ENCODE measurements at regions of chr1 and their contacts with region 1.

Region 1: GRCh38 chr1:112390775-112391602 is 5.0 kb upstream of the CTTNBP2NL start:
- DNase-seq: peak; percentile 89
- ATAC-seq: peak; percentile 85
- H3K4me3 ChIP-seq: peak overlapping the region; percentile 43 to 51
- H3K27ac ChIP-seq: peak overlapping the region; percentile 16
- H3K4me1 ChIP-seq: peaks cover 19 to 48% of the 10 kb centered on the region in 2 experiments
- H3K27me3 ChIP-seq: no peaks in the 10 kb centered on the region
- CTCF ChIP-seq: peak; percentile 92 to 94 (median 94)
- POLR2A ChIP-seq: no peak
- RAD21 ChIP-seq: peak; percentile 99

Region 2: DNA sequence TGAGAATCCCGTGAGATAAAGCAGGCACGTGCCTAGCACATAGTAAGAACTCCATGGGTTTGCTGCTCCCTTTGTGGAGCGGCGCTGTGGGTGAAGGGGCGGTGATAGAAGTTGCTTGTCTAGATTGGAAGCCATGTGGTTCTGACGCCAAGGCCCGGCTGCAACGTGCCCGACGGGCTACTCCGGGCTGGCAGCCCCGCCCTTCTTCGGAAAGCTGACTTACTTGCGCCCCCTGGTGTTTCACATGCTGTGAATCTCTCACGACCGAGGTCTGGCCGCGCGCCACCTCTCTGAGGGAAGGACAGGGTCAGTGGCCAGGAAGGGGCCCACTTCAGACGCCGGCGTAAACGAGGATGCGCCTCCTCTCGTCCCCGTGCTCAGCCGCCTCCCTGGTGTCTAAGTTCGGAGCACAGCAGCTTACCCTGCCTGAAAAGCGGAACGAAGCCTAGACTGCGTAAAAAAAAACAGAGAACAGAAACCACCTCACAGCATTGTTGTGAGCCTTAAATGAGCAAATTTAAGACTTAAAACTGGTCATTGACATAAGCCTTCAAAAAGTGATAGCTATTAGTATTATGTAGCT is 75.2 kb after region 1 on chr1:
- CTCF ChIA-PET with region 1: interaction called, 6 read pairs
- POLR2A ChIA-PET with region 1: interaction called, 3 read pairs
- RAD21 ChIA-PET with region 1: interaction called in 1 of 2 experiments, 4 read pairs
- intact Hi-C with region 1: loop called (anchors 1 kb)
- DNase-seq: peak; percentile 82
- ATAC-seq: peak; percentile 93
- H3K4me3 ChIP-seq: peak overlapping the region; percentile 19 to 26
- H3K27ac ChIP-seq: no peak overlapping the region
- H3K4me1 ChIP-seq: peaks cover 0 to 22% of the 10 kb centered on the region in 2 experiments; a peak in 2 of 4 replicates
- H3K27me3 ChIP-seq: no peaks in the 10 kb centered on the region
- CTCF ChIP-seq: peak; percentile 74 to 89 (median 80)
- POLR2A ChIP-seq: no peak
- RAD21 ChIP-seq: peak; percentile 90

Region 3: DNA sequence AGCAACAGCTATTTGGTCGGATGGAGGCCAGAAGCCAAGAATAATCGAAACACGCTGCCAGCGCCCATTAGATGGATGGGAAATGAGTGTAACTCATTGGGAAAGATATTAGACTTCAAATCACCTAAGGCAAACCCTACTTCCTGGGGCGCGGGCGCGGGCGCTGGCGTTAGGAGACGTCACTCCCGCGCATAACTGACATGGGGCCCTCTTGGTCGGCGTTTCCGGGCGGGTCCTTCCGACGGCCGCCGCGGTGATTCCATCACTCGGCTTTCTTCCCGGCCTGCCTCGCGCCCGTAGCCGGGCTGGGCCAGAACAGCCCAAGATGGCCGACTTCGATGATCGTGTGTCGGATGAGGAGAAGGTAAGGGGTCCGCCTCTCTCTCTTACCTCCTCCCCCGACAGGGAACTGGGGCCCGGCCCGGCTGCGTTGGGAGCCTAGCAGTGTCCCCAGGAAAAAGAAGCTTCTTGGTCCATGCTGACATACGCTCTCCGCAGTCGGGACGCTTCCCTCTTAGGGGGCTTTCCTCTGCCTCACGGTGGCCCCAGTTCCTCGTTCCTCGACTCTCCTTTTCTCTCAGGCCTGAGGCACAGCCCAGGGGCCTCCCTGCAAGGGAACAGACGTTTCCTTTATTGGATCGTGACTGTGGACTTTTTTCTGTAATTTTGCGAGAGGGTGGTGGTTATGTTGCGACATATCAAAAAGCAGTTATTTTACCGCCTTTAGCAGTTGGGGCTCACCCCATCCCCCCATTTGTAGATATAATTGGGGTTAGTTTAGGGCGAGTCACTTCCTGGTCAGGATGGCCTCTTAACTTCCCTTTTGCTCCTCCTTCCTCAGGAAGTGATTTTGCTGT is 228.8 kb after region 1 on chr1 and contains the start of gene CAPZA1:
- CTCF ChIA-PET with region 1: interaction called, 15 read pairs
- POLR2A ChIA-PET with region 1: interaction called, 5 read pairs
- RAD21 ChIA-PET with region 1: interaction called in 1 of 2 experiments, 3 read pairs
- intact Hi-C with region 1: loop called (anchors 1 kb)
- DNase-seq: peak; percentile 79
- ATAC-seq: peak; percentile 92
- H3K4me3 ChIP-seq: peak within 1 kb of the TSS; percentile 76 to 93
- H3K27ac ChIP-seq: peak within 1 kb of the TSS; percentile 87
- H3K4me1 ChIP-seq: peaks cover 9 to 24% of the 10 kb centered on the region in 2 experiments; a peak in 3 of 4 replicates
- H3K27me3 ChIP-seq: no peaks in the 10 kb centered on the region
- CTCF ChIP-seq: no peak
- POLR2A ChIP-seq: peak; percentile 89
- RAD21 ChIP-seq: no peak
- total RNA-seq, gene CAPZA1: 148 TPM

Region 4: GRCh38 chr1:112715264-112716053 is 324.5 kb after region 1 on chr1 and contains the start of gene PPM1J:
- CTCF ChIA-PET with region 1: interaction called, 22 read pairs
- POLR2A ChIA-PET with region 1: interaction called, 5 read pairs
- RAD21 ChIA-PET with region 1: interaction called, 3 to 4 read pairs
- intact Hi-C with region 1: no loop called
- DNase-seq: peak; percentile 89
- ATAC-seq: peak; percentile 82
- H3K4me3 ChIP-seq: peak within 1 kb of the TSS; percentile 58 to 75
- H3K27ac ChIP-seq: peak within 1 kb of the TSS; percentile 34; the same call in 1 of the 2 replicates
- H3K4me1 ChIP-seq: peaks cover 18 to 39% of the 10 kb centered on the region in 2 experiments
- H3K27me3 ChIP-seq: no peaks in the 10 kb centered on the region
- CTCF ChIP-seq: no peak
- POLR2A ChIP-seq: no peak
- RAD21 ChIP-seq: no peak
- total RNA-seq, gene PPM1J: 7.5 TPM